ENCODE measurements at regions of chr3 and their contacts with region 1.

Region 1: GRCh38 chr3:12484198-12484974 is at the start of gene TSEN2:
- DNase-seq: peak; percentile 96 to 100 (median 98)
- H3K4me3 ChIP-seq: peak within 1 kb of the TSS; percentile 78 to 83
- H3K4me3 Mint-ChIP-seq: peak within 1 kb of the TSS; percentile 90 to 98 (median 96)
- H3K27ac ChIP-seq: peak within 1 kb of the TSS; percentile 81
- H3K27ac Mint-ChIP-seq: peak within 1 kb of the TSS; percentile 96 to 99 (median 97)
- H3K4me1 ChIP-seq: peaks cover 28% of the 10 kb centered on the region
- H3K4me1 Mint-ChIP-seq: peaks cover 19 to 43% (median 34%) of the 10 kb centered on the region in 4 donors
- H3K27me3 ChIP-seq: no peaks in the 10 kb centered on the region
- H3K27me3 Mint-ChIP-seq: no peaks in the 10 kb centered on the region
- total RNA-seq, gene TSEN2: 18.5 to 19.6 TPM

Region 2: DNA sequence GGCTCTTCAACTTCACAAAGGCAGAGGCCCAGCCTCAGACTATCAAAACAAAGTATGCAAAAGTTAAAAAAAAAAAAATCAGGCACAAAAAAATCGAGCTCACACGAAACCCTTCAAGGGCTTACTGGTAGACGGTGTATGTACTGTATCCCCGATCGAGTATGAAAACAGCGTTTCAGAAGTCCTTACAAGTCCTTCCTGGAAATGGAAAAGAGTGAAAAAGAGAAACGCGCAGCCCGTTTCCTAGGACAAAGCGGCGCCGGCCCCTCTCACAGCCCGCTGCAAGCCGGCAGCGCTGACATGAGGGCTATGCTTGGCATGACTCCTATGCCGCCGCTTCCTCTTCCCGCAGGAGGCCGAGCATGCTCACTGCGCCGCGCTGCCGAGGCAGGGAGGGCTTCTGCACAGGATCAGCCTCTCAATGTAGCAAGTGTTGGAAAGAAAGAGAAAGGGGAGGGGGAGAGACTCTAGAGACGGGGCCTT is 840.7 kb before region 1 on chr3 and contains the start of gene VGLL4:
- CTCF ChIA-PET with region 1: no interaction called
- POLR2A ChIA-PET with region 1: no interaction called
- intact Hi-C with region 1: loop called (anchors 5 kb)
- DNase-seq: peak; percentile 42 to 64 (median 44)
- H3K4me3 ChIP-seq: peak within 1 kb of the TSS; percentile 79 to 98
- H3K4me3 Mint-ChIP-seq: peak within 1 kb of the TSS; percentile 95 to 100 (median 98)
- H3K27ac ChIP-seq: peak within 1 kb of the TSS; percentile 72
- H3K27ac Mint-ChIP-seq: peak within 1 kb of the TSS; percentile 93 to 100 (median 98)
- H3K4me1 ChIP-seq: peaks cover 28% of the 10 kb centered on the region
- H3K4me1 Mint-ChIP-seq: peaks cover 19 to 54% (median 28%) of the 10 kb centered on the region in 4 donors
- H3K27me3 ChIP-seq: no peaks in the 10 kb centered on the region
- H3K27me3 Mint-ChIP-seq: no peaks in the 10 kb centered on the region
- total RNA-seq, gene VGLL4: 29.2 to 30.3 TPM

Region 3: GRCh38 chr3:11846281-11847034 is 637.9 kb before region 1 on chr3 and contains the start of gene TAMM41:
- CTCF ChIA-PET with region 1: interaction called, 7 read pairs
- POLR2A ChIA-PET with region 1: interaction called, 4 read pairs
- intact Hi-C with region 1: loop called (anchors 1 kb)
- DNase-seq: peak; percentile 85 to 90 (median 87)
- H3K4me3 ChIP-seq: peak within 1 kb of the TSS; percentile 79 to 92
- H3K4me3 Mint-ChIP-seq: peak within 1 kb of the TSS; percentile 96 to 99 (median 98)
- H3K27ac ChIP-seq: peak within 1 kb of the TSS; percentile 88
- H3K27ac Mint-ChIP-seq: peak within 1 kb of the TSS; percentile 87 to 99 (median 98)
- H3K4me1 ChIP-seq: peaks cover 30% of the 10 kb centered on the region
- H3K4me1 Mint-ChIP-seq: peaks cover 31 to 56% (median 40%) of the 10 kb centered on the region in 4 donors
- H3K27me3 ChIP-seq: no peaks in the 10 kb centered on the region
- H3K27me3 Mint-ChIP-seq: no peaks in the 10 kb centered on the region
- total RNA-seq, gene TAMM41: 47.0 to 52.2 TPM

Region 4: DNA sequence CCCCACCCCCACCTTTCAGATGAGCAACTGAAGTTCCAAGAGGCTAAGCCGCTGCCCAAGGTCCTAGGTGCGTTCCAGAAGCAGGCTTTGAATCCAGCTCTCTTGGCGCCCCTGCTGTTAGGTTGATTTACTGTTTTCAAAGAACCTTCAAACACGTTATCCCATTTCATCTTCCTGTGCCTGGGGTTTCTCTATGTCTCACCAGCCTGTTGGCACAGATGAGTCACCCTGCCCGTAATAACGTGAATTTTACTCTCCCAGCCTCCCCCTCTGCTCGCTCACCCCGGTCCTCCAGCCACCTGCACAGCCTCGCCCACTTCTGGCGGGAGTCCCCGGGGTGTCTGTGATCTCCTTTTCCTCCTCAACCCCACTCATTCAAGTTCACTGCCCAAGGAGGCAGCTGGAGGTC is 13.1 kb before region 1 on chr3:
- CTCF ChIA-PET with region 1: interaction called, 30 read pairs
- POLR2A ChIA-PET with region 1: interaction called, 5 read pairs
- intact Hi-C with region 1: no loop called
- DNase-seq: peak in 1 of 5 donors; percentile 56
- H3K4me3 ChIP-seq: no peak overlapping the region
- H3K4me3 Mint-ChIP-seq: peak overlapping the region in 3 of 8 donors; percentile 25 to 53 (median 29)
- H3K27ac ChIP-seq: no peak overlapping the region
- H3K27ac Mint-ChIP-seq: peak overlapping the region in 2 of 7 donors; percentile 25 to 44
- H3K4me1 ChIP-seq: peaks cover 5% of the 10 kb centered on the region
- H3K4me1 Mint-ChIP-seq: peaks cover 6 to 18% (median 12%) of the 10 kb centered on the region in 4 donors
- H3K27me3 ChIP-seq: no peaks in the 10 kb centered on the region
- H3K27me3 Mint-ChIP-seq: peaks cover 0 to 3% of the 10 kb centered on the region in 2 donors

Region 5: DNA sequence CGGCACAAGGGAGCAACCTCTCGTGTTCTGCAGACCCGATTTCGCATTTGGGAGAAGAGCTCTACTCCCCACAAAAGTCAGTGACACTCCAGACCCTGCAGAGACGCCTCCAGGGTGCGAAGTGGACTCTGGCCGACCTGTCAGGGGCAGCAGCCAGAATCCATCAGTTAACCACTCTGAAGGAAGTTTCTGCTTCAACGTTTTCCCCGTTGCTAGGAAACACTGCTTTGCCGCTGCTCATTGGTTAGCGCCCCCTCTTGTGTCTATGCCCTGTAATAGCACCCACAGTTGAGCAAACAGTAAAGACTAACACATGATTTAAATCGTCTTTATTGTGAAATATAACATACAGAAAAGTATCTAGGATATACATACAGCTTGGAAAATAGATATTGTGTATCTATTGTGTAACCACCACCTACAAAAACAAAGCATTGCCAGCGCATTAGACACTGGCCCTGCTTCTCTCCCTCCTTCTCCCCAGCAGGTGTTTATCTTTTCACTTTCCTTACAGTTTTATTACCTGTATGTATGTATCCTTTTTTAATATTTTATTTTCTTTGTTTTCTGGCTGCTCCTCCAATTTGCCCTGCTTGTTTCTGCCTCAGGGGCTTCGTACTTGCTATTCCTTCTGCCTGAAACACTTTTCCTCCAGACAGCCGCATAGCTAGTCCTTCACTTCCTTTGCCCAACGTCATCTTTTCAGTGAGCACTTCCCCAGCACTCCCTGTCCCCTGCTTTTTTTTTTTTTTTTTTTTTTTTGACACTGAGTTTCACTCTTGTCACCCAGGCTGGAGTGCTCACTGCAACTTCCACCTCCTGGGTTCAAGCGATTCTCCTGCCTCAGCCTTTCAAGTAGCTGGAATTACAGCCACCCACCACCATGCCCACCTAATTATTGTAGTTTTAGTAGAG is 235.9 kb after region 1 on chr3:
- CTCF ChIA-PET with region 1: interaction called, 11 read pairs
- POLR2A ChIA-PET with region 1: no interaction called
- intact Hi-C with region 1: loop called (anchors 1 kb)
- DNase-seq: peak; percentile 75 to 83 (median 78)
- H3K4me3 ChIP-seq: peak overlapping the region in 1 of 2 donors; percentile 22
- H3K4me3 Mint-ChIP-seq: peak overlapping the region; percentile 58 to 82 (median 74)
- H3K27ac ChIP-seq: no peak overlapping the region
- H3K27ac Mint-ChIP-seq: peak overlapping the region; percentile 57 to 95 (median 92)
- H3K4me1 ChIP-seq: peaks cover 5% of the 10 kb centered on the region
- H3K4me1 Mint-ChIP-seq: peaks cover 9 to 15% (median 10%) of the 10 kb centered on the region in 4 donors
- H3K27me3 ChIP-seq: no peaks in the 10 kb centered on the region
- H3K27me3 Mint-ChIP-seq: no peaks in the 10 kb centered on the region